Caco-2 (cell line): ENCODE measurements at regions of chr15 and their contacts with region 1.

Region 1: GRCh38 chr15:96170979-96171739 is 159.3 kb upstream of the NR2F2 start:
- DNase-seq: peak; percentile 84 to 87
- H3K4me3 ChIP-seq: no peak overlapping the region
- H3K4me3 Mint-ChIP-seq: no peak overlapping the region
- H3K27ac Mint-ChIP-seq: no peak overlapping the region
- H3K4me1 ChIP-seq: peaks cover 46% of the 10 kb centered on the region
- H3K4me1 Mint-ChIP-seq: peaks cover 23% of the 10 kb centered on the region
- H3K27me3 ChIP-seq: no peaks in the 10 kb centered on the region
- H3K27me3 Mint-ChIP-seq: no peaks in the 10 kb centered on the region
- CTCF ChIP-seq: no peak

Region 2: DNA sequence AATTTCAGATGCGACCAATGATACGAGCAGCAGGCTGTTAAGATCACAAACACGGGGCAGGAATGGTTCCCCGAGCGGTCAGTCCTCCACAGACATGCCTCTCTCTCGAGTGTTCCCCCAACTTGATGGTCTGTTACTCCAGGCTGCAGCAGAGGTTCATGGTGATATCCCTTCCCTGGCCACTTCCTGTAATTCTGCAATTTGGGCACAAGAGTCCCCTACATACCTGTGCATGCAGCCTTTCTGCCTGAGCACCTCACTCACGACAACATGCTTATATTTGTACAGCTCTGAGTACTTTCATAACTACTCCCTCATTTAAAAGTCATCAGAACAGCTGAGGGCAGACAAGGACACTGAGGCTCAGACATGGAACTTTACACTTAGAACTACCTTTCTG is 248.7 kb before region 1 on chr15:
- CTCF ChIA-PET with region 1: no interaction called
- POLR2A ChIA-PET with region 1: no interaction called
- intact Hi-C with region 1: loop called (anchors 1 kb)
- DNase-seq: peak; percentile 52 to 57
- H3K4me3 ChIP-seq: no peak overlapping the region
- H3K4me3 Mint-ChIP-seq: no peak overlapping the region
- H3K27ac Mint-ChIP-seq: no peak overlapping the region
- H3K4me1 ChIP-seq: no peaks in the 10 kb centered on the region
- H3K4me1 Mint-ChIP-seq: peaks cover 7% of the 10 kb centered on the region
- H3K27me3 ChIP-seq: no peaks in the 10 kb centered on the region
- H3K27me3 Mint-ChIP-seq: no peaks in the 10 kb centered on the region
- CTCF ChIP-seq: peak in 1 of 2 experiments; percentile 33

Region 3: GRCh38 chr15:96053031-96053780 is 118.0 kb before region 1 on chr15:
- CTCF ChIA-PET with region 1: no interaction called
- POLR2A ChIA-PET with region 1: no interaction called
- intact Hi-C with region 1: loop called (anchors 1 kb)
- DNase-seq: peak; percentile 9 to 42
- H3K4me3 ChIP-seq: no peak overlapping the region
- H3K4me3 Mint-ChIP-seq: peak overlapping the region; percentile 66
- H3K27ac Mint-ChIP-seq: peak overlapping the region; percentile 86
- H3K4me1 ChIP-seq: peaks cover 56% of the 10 kb centered on the region
- H3K4me1 Mint-ChIP-seq: peaks cover 20% of the 10 kb centered on the region
- H3K27me3 ChIP-seq: no peaks in the 10 kb centered on the region
- H3K27me3 Mint-ChIP-seq: no peaks in the 10 kb centered on the region
- CTCF ChIP-seq: no peak

Region 4: GRCh38 chr15:96122077-96122681 is 49.0 kb before region 1 on chr15:
- CTCF ChIA-PET with region 1: no interaction called
- POLR2A ChIA-PET with region 1: interaction called, 3 read pairs
- intact Hi-C with region 1: loop called (anchors 1 kb)
- DNase-seq: no peak
- H3K4me3 ChIP-seq: no peak overlapping the region
- H3K4me3 Mint-ChIP-seq: peak overlapping the region; percentile 23
- H3K27ac Mint-ChIP-seq: peak overlapping the region; percentile 66
- H3K4me1 ChIP-seq: peaks cover 49% of the 10 kb centered on the region
- H3K4me1 Mint-ChIP-seq: peaks cover 54% of the 10 kb centered on the region
- H3K27me3 ChIP-seq: no peaks in the 10 kb centered on the region
- H3K27me3 Mint-ChIP-seq: no peaks in the 10 kb centered on the region
- CTCF ChIP-seq: no peak

Region 5: GRCh38 chr15:96200357-96200967 is 29.3 kb after region 1 on chr15:
- CTCF ChIA-PET with region 1: no interaction called
- POLR2A ChIA-PET with region 1: no interaction called
- intact Hi-C with region 1: loop called (anchors 1 kb)
- DNase-seq: peak; percentile 68 to 76
- H3K4me3 ChIP-seq: no peak overlapping the region
- H3K4me3 Mint-ChIP-seq: peak overlapping the region; percentile 24
- H3K27ac Mint-ChIP-seq: peak overlapping the region; percentile 72
- H3K4me1 ChIP-seq: peaks cover 44% of the 10 kb centered on the region
- H3K4me1 Mint-ChIP-seq: peaks cover 29% of the 10 kb centered on the region
- H3K27me3 ChIP-seq: no peaks in the 10 kb centered on the region
- H3K27me3 Mint-ChIP-seq: no peaks in the 10 kb centered on the region
- CTCF ChIP-seq: no peak

Region 6: DNA sequence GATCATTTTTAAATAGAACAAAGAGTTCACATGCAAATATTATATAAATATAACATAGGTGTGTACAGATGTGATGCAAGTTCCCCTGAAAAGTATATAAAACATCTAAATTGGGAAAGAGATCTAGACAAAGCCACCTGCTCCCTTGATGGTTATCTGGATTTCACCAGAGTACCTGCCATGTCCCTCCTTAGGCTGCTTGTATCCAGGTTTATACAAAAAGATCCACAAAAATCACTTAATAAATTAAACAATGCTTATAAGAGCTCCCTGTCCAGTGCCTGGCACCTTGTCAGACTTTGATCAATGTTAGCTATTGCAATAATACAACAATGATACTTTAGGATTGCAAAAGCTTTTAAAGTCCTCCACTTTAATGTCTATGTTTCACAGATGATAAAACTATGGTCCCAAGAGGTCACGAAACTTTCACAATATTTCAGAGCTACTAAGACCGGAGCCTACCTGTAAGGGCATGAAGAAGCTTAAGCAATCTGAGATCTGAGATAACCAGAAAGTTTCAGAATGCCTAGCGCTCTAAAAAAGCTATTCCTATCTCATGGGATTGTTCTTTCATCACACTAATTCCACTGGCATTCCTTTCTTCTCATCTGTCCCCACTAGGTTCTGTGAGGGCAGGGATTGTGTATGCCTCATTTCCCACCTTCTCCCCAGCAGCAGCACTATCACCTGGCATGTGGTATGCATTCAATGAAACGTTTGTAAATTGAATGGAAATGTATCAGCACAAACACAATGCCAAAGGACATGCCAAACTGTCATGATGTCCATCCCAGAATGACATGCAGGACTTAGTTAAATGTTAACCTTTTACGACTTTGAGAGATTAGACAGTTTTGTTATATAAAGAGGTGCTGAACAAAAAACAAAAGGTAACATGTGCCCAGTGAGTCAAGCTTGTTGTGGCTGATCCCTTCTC is 54.4 kb after region 1 on chr15:
- CTCF ChIA-PET with region 1: no interaction called
- POLR2A ChIA-PET with region 1: interaction called, 10 read pairs
- intact Hi-C with region 1: loop called (anchors 1 kb)
- DNase-seq: peak; percentile 87 to 91
- H3K4me3 ChIP-seq: no peak overlapping the region
- H3K4me3 Mint-ChIP-seq: peak overlapping the region; percentile 12
- H3K27ac Mint-ChIP-seq: peak overlapping the region; percentile 74
- H3K4me1 ChIP-seq: peaks cover 50% of the 10 kb centered on the region
- H3K4me1 Mint-ChIP-seq: peaks cover 49% of the 10 kb centered on the region
- H3K27me3 ChIP-seq: no peaks in the 10 kb centered on the region
- H3K27me3 Mint-ChIP-seq: no peaks in the 10 kb centered on the region
- CTCF ChIP-seq: no peak